ENCODE measurements at regions of chr15 and their contacts with region 1.

Region 1: DNA sequence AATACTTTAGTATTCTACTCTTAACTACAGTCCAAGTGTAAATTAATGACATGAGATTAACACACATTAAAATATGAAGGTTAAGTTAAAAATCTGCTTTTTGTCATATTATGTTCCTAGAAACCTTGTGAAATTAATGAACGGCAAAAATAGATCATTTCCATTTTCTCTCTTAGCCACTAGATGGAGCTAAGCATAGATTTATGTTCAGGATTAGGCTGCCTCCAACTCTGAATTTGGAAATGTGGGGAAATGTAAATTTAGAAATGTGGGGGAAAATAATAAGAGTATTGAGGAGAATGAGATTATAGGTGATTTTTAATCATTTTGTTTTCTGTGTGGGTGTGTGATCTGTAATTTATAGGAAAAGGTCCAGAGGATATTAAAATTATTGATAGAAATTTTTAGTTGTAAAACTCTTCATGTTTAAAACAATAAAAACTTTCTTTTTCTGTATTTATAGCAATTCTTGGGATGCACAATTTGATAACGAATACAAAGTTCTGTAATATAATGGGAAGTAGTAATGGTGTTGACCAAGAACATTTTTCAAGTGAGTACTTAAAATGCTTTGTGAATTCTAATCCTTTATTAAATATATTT is 59.2 kb downstream of the TMOD3 start:
- DNase-seq: no peak
- H3K4me3 ChIP-seq: no peak overlapping the region
- H3K27me3 ChIP-seq: no peaks in the 10 kb centered on the region
- CTCF ChIP-seq: peak; percentile 70

Region 2: GRCh38 chr15:51814606-51815005 is 74.1 kb before region 1 on chr15:
- CTCF ChIA-PET with region 1: no interaction called
- POLR2A ChIA-PET with region 1: no interaction called
- DNase-seq: no peak
- H3K4me3 ChIP-seq: no peak overlapping the region
- H3K27me3 ChIP-seq: no peaks in the 10 kb centered on the region
- CTCF ChIP-seq: no peak

Region 3: GRCh38 chr15:51904931-51905330 is 16.2 kb after region 1 on chr15:
- CTCF ChIA-PET with region 1: interaction called, 16 read pairs
- POLR2A ChIA-PET with region 1: no interaction called
- DNase-seq: no peak
- H3K4me3 ChIP-seq: no peak overlapping the region
- H3K27me3 ChIP-seq: no peaks in the 10 kb centered on the region
- CTCF ChIP-seq: no peak

Measured in BJ (cell line).